ENCODE measurements at regions of chr3 and their contacts with region 1.

Region 1: GRCh38 chr3:38651154-38651789 is 1.8 kb upstream of the SCN5A start:
- DNase-seq: peak; percentile 51 to 83 (median 73)
- H3K4me3 ChIP-seq: no peak overlapping the region
- H3K27ac ChIP-seq: no peak overlapping the region
- H3K4me1 ChIP-seq: peaks cover 6 to 10% of the 10 kb centered on the region in 2 donors
- H3K27me3 ChIP-seq: peaks cover 26% of the 10 kb centered on the region
- CTCF ChIP-seq: peak; percentile 87 to 94 (median 92)
- POLR2A ChIP-seq: no peak

Region 2: DNA sequence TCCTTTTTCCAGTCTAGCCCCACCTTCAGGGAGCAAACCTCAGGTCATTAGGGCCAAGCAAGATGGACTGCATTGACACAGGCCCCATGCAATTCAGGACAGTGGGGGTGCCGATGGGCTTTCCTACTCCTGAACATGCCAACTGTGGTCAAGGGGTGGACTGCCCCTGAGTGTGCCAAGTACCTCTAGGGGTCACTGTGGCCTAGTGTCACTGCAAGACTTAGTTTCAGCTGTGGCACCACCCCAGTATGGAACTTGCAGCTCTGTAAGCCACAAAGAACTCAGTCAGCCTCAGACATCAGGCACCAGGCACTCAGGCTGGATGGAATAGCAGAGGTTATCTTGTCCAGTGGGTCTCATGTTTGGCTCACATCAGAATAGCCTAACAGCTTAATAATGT is 122.8 kb before region 1 on chr3:
- intact Hi-C with region 1: loop called (anchors 5 to 10 kb)
- DNase-seq: no peak
- H3K4me3 ChIP-seq: no peak overlapping the region
- H3K27ac ChIP-seq: no peak overlapping the region
- H3K4me1 ChIP-seq: no peaks in the 10 kb centered on the region
- H3K27me3 ChIP-seq: no peaks in the 10 kb centered on the region
- CTCF ChIP-seq: no peak
- POLR2A ChIP-seq: no peak